ENCODE measurements at regions of chr12 and their contacts with region 1.

Region 1: DNA sequence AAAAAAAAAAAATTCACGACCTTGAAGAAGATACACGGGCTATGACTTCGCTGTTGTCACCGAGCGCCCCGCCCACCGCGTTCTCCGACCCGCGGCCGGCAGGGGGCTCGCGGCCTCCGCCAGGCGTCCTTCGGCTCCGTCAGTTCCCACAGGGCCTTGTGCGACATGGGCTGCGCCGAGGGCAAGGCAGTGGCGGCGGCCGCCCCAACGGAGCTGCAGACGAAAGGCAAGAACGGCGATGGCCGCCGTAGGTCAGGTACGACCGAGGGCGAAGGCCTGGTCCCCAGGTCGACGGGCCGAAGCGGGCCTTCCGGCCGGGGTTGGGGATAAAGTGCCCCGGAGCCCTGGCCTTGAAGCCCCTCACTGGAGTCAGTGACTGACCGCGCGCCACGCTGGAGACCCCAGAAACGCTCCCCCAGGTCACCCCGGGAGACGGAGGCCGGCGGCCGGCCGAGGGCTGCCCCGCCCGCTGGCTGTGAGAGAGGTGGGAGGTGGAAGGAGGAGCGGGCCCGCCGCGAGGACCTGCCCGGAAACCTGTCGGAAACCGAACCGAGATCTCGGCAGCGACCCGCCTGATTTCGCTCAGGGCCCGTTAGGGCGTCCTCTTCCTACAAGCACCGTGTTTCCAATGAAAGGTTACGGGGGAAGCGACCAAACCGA is at the start of gene TXNRD1:
- DNase-seq: peak; percentile 56
- ATAC-seq: peak; percentile 74
- H3K4me3 ChIP-seq: peak within 1 kb of the TSS; percentile 30 to 40
- H3K27ac ChIP-seq: peak within 1 kb of the TSS; percentile 48; the same call in 1 of the 2 replicates
- H3K4me1 ChIP-seq: peaks cover 36 to 56% of the 10 kb centered on the region in 2 experiments
- H3K27me3 ChIP-seq: no peaks in the 10 kb centered on the region
- CTCF ChIP-seq: peak; percentile 83 to 87 (median 84)
- POLR2A ChIP-seq: no peak
- RAD21 ChIP-seq: peak; percentile 97
- total RNA-seq, gene TXNRD1: 327 TPM

Region 2: DNA sequence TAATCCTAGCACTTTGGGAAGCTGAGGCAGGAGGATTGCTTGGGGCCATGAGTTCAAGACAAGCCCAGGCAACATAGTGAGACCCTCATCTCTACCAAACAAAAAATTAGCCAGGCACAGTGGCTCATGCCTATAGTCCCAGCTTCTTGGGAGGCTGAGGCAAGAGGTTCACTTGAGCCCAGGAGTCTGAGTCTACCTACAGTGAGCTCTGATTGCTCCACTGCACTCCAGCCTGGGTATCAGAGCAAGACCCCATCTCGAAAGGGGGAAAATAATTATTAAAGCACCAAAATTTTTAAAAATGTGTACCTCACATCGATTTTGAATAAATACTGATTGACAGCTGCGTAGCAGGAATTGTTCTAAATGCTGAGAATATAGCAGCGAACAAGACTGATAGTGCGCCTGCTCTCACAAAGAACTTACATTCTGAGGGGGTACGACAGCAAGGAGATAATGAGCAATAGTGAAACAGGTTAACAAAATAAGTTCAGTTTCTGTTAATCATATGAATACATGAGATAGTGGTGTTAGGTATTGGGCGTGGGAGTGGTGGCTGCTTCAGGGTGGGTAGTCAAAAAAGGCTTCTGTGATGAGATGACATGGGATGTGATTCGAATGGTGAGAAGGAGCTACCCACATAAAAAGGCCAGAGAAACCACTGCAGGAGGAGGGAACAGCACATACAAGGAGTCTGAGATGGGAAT is 131.8 kb before region 1 on chr12:
- CTCF ChIA-PET with region 1: no interaction called
- POLR2A ChIA-PET with region 1: no interaction called
- RAD21 ChIA-PET with region 1: no interaction called
- intact Hi-C with region 1: no loop called
- DNase-seq: no peak
- ATAC-seq: no peak
- H3K4me3 ChIP-seq: no peak overlapping the region
- H3K27ac ChIP-seq: no peak overlapping the region
- H3K4me1 ChIP-seq: no peaks in the 10 kb centered on the region
- H3K27me3 ChIP-seq: no peaks in the 10 kb centered on the region
- CTCF ChIP-seq: no peak
- POLR2A ChIP-seq: no peak
- RAD21 ChIP-seq: no peak

Region 3: GRCh38 chr12:104154286-104154685 is 61.5 kb before region 1 on chr12:
- CTCF ChIA-PET with region 1: no interaction called
- POLR2A ChIA-PET with region 1: no interaction called
- RAD21 ChIA-PET with region 1: no interaction called
- intact Hi-C with region 1: no loop called
- DNase-seq: no peak
- ATAC-seq: no peak
- H3K4me3 ChIP-seq: no peak overlapping the region
- H3K27ac ChIP-seq: no peak overlapping the region
- H3K4me1 ChIP-seq: no peaks in the 10 kb centered on the region
- H3K27me3 ChIP-seq: no peaks in the 10 kb centered on the region
- CTCF ChIP-seq: no peak
- POLR2A ChIP-seq: no peak
- RAD21 ChIP-seq: no peak

Region 4: GRCh38 chr12:104258476-104259067 is 42.8 kb after region 1 on chr12:
- CTCF ChIA-PET with region 1: interaction called, 5 read pairs
- POLR2A ChIA-PET with region 1: interaction called, 12 read pairs
- RAD21 ChIA-PET with region 1: no interaction called
- intact Hi-C with region 1: loop called (anchors 5 kb)
- DNase-seq: no peak
- ATAC-seq: peak; percentile 43
- H3K4me3 ChIP-seq: no peak overlapping the region
- H3K27ac ChIP-seq: no peak overlapping the region
- H3K4me1 ChIP-seq: peaks cover 16 to 55% of the 10 kb centered on the region in 2 experiments
- H3K27me3 ChIP-seq: no peaks in the 10 kb centered on the region
- CTCF ChIP-seq: no peak
- POLR2A ChIP-seq: no peak
- RAD21 ChIP-seq: no peak

Region 5: GRCh38 chr12:104286538-104287482 is 71.0 kb after region 1 on chr12:
- CTCF ChIA-PET with region 1: interaction called, 4 read pairs
- POLR2A ChIA-PET with region 1: interaction called, 80 read pairs
- RAD21 ChIA-PET with region 1: interaction called, 3 read pairs
- intact Hi-C with region 1: loop called (anchors 1 kb)
- DNase-seq: peak; percentile 96
- ATAC-seq: peak; percentile 84
- H3K4me3 ChIP-seq: peak overlapping the region; percentile 92 to 93
- H3K27ac ChIP-seq: peak overlapping the region; percentile 96
- H3K4me1 ChIP-seq: peaks cover 26 to 72% of the 10 kb centered on the region in 2 experiments
- H3K27me3 ChIP-seq: no peaks in the 10 kb centered on the region
- CTCF ChIP-seq: no peak
- POLR2A ChIP-seq: peak; percentile 87
- RAD21 ChIP-seq: 0 out of 2 replicates have a peak, but pooled peaks have one; percentile 25

Region 6: GRCh38 chr12:104294845-104295688 is 79.3 kb after region 1 on chr12:
- CTCF ChIA-PET with region 1: interaction called, 5 read pairs
- POLR2A ChIA-PET with region 1: interaction called, 11 read pairs
- RAD21 ChIA-PET with region 1: no interaction called
- intact Hi-C with region 1: loop called (anchors 1 kb)
- DNase-seq: no peak
- ATAC-seq: no peak
- H3K4me3 ChIP-seq: no peak overlapping the region
- H3K27ac ChIP-seq: no peak overlapping the region
- H3K4me1 ChIP-seq: peaks cover 15 to 70% of the 10 kb centered on the region in 2 experiments; a peak in 3 of 4 replicates
- H3K27me3 ChIP-seq: no peaks in the 10 kb centered on the region
- CTCF ChIP-seq: no peak
- POLR2A ChIP-seq: no peak
- RAD21 ChIP-seq: no peak

Region 7: GRCh38 chr12:104358347-104359003 is 142.7 kb after region 1 on chr12:
- CTCF ChIA-PET with region 1: interaction called, 3 read pairs
- POLR2A ChIA-PET with region 1: interaction called, 4 read pairs
- RAD21 ChIA-PET with region 1: no interaction called
- intact Hi-C with region 1: loop called (anchors 1 kb)
- DNase-seq: peak; percentile 35
- ATAC-seq: peak; percentile 72
- H3K4me3 ChIP-seq: no peak overlapping the region
- H3K27ac ChIP-seq: no peak overlapping the region
- H3K4me1 ChIP-seq: no peaks in the 10 kb centered on the region
- H3K27me3 ChIP-seq: no peaks in the 10 kb centered on the region
- CTCF ChIP-seq: peak; percentile 78 to 93 (median 79)
- POLR2A ChIP-seq: no peak
- RAD21 ChIP-seq: peak; percentile 87

Region 8: DNA sequence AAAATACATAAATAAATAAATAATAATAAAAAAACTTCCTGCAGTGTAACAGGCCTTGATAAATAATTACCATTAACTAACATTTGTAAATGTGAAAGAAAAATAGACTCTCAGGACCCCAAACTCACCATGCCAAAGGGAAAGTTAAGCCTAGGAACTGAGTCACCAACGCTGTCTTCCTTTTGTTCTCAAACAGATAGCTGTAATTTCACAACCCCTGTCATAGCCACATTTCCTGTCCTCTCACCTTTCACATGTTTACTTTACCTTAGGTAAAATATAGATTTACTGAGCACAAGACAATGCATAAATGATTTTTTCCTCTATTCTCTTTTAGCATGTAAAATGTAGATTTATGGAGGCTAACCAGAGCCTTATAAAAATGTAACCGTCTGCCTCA is 205.1 kb after region 1 on chr12:
- CTCF ChIA-PET with region 1: no interaction called
- POLR2A ChIA-PET with region 1: no interaction called
- RAD21 ChIA-PET with region 1: no interaction called
- intact Hi-C with region 1: no loop called
- DNase-seq: no peak
- ATAC-seq: no peak
- H3K4me3 ChIP-seq: no peak overlapping the region
- H3K27ac ChIP-seq: no peak overlapping the region
- H3K4me1 ChIP-seq: peaks cover 29 to 45% of the 10 kb centered on the region in 2 experiments
- H3K27me3 ChIP-seq: peaks cover 7% of the 10 kb centered on the region; the same call in 1 of the 2 replicates
- CTCF ChIP-seq: no peak
- POLR2A ChIP-seq: no peak
- RAD21 ChIP-seq: no peak

Region 9: DNA sequence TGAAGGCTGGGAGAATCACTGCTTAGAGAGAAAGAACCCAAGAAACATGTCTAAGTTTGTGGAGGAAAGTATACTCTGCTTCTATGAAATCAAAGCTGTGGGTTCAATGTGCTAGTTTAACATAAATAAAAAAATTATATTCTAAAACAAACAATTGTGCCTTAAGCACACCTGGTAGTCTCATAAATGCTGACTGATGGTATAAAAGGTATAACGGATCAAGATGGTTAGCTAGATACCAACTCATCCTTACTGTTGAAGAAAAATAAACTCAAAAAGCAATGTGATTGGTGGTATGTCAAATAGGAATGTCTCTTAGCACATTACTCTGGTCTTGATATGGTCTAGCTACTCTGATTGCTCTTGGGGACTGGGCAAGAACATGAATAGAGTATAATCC is 624.5 kb after region 1 on chr12:
- CTCF ChIA-PET with region 1: no interaction called
- POLR2A ChIA-PET with region 1: no interaction called
- RAD21 ChIA-PET with region 1: no interaction called
- intact Hi-C with region 1: no loop called
- DNase-seq: no peak
- ATAC-seq: no peak
- H3K4me3 ChIP-seq: no peak overlapping the region
- H3K27ac ChIP-seq: no peak overlapping the region
- H3K4me1 ChIP-seq: no peaks in the 10 kb centered on the region
- H3K27me3 ChIP-seq: no peaks in the 10 kb centered on the region
- CTCF ChIP-seq: no peak
- POLR2A ChIP-seq: no peak
- RAD21 ChIP-seq: no peak

Measured in HCT116 (cell line).